GM10248 (cell line): ENCODE measurements at regions of chr16 and their contacts with region 1.

Region 1: DNA sequence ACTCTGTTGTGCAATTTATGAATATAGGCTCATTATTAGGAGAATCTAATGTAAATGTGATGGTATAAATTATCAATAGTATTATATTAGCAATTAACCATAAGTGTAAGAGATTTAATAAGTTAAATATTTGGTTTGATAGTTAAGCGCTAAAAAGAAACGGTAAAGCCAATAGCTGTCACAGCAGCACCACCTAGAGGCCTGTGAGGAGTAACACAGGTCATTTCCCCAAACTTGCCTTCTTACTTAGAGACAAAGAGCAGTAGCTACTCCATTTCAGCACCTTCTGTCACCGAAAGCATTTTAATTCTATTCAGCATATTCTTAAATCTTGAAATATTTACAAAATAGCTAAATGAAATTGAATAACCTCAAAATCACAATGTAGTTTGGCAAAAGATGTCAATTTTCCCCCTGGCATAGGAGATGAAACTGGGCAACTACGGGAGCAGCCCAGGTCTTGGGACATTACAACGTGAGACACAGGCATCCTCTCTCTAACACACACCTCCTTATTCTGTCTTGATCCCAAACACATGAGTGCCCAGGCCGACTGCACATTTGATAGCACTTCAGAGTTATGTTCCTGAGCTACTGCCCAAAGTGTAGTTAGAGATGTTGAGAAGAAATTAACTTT is 14.2 kb upstream of the DYNLRB2 start:
- DNase-seq: peak; percentile 46
- CTCF ChIP-seq: peak; percentile 88

Region 2: GRCh38 chr16:80540516-80541272 is 14.2 kb after region 1 on chr16 and contains the start of gene DYNLRB2:
- CTCF ChIA-PET with region 1: interaction called, 34 read pairs
- POLR2A ChIA-PET with region 1: no interaction called
- DNase-seq: peak; percentile 93
- CTCF ChIP-seq: no peak

Region 3: GRCh38 chr16:80554033-80554432 is 27.5 kb after region 1 on chr16:
- CTCF ChIA-PET with region 1: interaction called, 12 read pairs
- POLR2A ChIA-PET with region 1: no interaction called
- DNase-seq: no peak
- CTCF ChIP-seq: no peak

Region 4: DNA sequence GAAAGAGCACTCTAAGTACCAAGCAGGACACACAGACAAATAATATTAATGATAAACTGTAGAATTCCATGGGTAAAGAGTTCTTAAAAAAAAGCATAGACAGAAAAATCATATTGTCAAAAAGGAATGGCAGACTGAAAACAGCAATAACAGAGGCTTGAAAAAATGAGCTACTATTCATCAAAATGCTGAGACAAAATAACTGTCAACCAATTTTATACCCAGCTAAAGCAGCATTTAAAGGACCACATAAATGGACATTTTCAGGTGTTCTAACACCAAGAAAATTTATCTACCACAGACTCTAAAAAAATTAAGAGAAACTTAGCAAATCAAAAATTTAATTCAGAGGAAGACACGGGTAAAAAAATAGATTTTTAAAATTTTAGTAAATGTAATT is 133.3 kb after region 1 on chr16:
- CTCF ChIA-PET with region 1: interaction called, 10 read pairs
- POLR2A ChIA-PET with region 1: no interaction called
- DNase-seq: no peak
- CTCF ChIP-seq: no peak

Region 5: GRCh38 chr16:80806957-80807356 is 280.4 kb after region 1 on chr16:
- CTCF ChIA-PET with region 1: interaction called, 20 read pairs
- POLR2A ChIA-PET with region 1: no interaction called
- DNase-seq: no peak
- CTCF ChIP-seq: no peak

Region 6: GRCh38 chr16:80824718-80825364 is 298.3 kb after region 1 on chr16:
- CTCF ChIA-PET with region 1: interaction called, 90 read pairs
- POLR2A ChIA-PET with region 1: no interaction called
- DNase-seq: peak; percentile 44
- CTCF ChIP-seq: peak; percentile 72

Region 7: DNA sequence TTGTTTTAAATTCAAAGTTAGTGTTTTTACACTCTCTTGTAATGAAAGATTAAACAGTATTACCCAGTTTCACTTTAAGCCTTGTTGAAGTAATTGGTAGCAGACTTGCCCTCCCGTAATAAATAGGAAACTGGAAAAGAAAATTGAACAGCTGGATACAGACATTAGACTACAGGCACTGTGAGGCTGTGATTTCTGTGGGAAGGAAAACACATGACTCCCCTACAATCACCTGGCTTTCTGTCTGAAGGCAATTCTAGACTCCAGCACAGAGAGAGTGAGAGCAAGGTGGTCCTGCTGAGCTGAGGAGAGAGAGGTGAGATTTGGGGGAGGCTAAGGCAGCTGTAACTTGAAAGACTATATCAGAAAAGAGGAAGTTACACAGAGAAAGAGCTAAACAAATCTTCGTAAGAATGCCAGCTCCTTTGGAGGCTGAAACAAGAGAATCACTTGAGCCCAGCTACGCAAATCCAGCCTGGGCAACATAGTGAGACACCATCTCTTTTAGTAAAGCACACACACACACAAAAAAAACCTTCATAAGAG is 335.7 kb after region 1 on chr16:
- CTCF ChIA-PET with region 1: interaction called, 18 read pairs
- POLR2A ChIA-PET with region 1: no interaction called
- DNase-seq: no peak
- CTCF ChIP-seq: no peak